AG04450 (cell line): ENCODE measurements at regions of chr1 and their contacts with region 1.

Region 1: DNA sequence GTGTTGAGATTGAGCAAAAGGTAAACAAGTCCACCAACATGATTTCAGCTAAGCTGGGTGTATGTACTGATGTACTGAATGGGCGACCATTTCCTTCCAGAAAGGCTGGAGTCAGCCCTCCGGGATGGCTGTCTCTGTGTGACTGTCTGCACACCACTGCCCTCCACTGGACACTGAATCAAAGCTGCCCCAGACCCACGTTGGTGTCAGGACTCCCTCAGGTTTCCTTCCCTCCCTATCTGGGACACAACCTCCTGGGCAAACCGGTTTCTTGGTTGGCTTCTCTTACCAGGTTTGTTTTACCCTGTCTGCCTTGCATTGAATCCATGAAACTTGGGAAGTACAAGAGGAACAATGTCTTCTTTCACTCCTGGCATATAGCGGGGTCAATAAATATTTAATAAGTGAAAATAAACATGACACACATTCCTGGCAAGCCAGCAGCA is 5.3 kb upstream of the SRP9 start:
- DNase-seq: peak; percentile 82
- H3K4me3 ChIP-seq: no peak overlapping the region
- H3K27ac ChIP-seq: no peak overlapping the region
- H3K27me3 ChIP-seq: no peaks in the 10 kb centered on the region
- CTCF ChIP-seq: peak; percentile 92

Region 2: DNA sequence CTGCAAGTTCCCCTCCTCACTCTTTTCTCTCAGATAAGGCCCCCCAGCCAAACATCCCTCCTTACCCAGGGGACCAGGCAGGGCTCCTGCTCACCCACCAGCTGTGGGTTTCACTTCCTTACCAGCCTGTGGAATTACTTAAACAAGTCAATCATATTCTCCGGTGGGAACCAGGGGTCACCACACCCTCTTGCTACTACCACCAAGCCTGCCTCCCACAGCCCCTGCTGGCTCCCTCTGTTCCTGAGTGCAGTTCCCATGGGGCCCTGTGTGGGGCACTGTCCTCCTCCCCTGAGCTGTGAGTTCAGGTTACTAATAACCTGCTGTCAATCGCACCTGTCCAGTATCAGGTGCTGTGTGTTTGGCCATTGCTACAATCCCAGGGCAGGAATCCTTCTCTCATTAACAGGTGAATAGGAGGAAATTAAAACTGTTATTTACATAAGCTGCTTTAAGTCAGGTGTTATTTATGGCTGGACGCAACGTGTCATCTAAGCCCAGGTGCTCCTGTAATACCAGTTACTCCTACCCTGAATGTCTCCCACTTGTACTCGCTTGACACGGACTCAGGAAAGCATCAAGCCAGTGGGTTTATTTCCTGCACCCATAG is 291.4 kb before region 1 on chr1:
- CTCF ChIA-PET with region 1: interaction called, 102 read pairs
- POLR2A ChIA-PET with region 1: interaction called, 4 read pairs
- DNase-seq: no peak
- H3K4me3 ChIP-seq: no peak overlapping the region
- H3K27ac ChIP-seq: no peak overlapping the region
- H3K27me3 ChIP-seq: no peaks in the 10 kb centered on the region
- CTCF ChIP-seq: peak; percentile 72

Region 3: GRCh38 chr1:225506727-225507126 is 265.6 kb before region 1 on chr1:
- CTCF ChIA-PET with region 1: interaction called, 12 read pairs
- POLR2A ChIA-PET with region 1: interaction called, 3 read pairs
- DNase-seq: no peak
- H3K4me3 ChIP-seq: no peak overlapping the region
- H3K27ac ChIP-seq: no peak overlapping the region
- H3K27me3 ChIP-seq: no peaks in the 10 kb centered on the region
- CTCF ChIP-seq: no peak

Region 4: GRCh38 chr1:225523263-225523950 is 248.9 kb before region 1 on chr1:
- CTCF ChIA-PET with region 1: interaction called, 12 read pairs
- POLR2A ChIA-PET with region 1: interaction called, 8 read pairs
- DNase-seq: no peak
- H3K4me3 ChIP-seq: no peak overlapping the region
- H3K27ac ChIP-seq: no peak overlapping the region
- H3K27me3 ChIP-seq: no peaks in the 10 kb centered on the region
- CTCF ChIP-seq: no peak

Region 5: DNA sequence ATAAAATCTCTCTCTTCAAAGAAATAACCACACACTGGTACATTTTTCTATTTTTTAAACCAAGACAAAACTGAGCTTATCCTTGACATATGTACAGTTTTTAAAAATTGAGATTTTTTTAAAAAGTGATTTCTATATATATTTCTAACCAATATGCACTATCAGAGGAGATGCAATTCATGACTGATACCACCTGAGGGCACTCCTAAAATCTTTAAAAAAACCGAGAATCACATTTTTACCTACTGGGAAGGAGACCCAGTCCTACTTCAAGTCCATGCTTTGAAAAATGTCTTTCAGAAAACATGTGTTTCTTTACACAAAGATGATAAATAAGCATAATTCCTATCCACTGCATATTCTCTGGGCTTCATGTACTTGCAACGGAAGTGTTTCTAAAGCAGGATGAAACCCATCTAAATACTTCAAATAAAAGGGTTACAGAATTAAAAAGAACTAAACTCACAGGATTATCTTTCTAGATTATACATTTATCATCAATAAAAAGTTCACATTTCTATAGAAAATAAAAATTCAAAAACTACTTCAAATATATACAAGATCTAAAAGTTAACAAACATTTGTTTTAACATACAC is 218.0 kb before region 1 on chr1:
- CTCF ChIA-PET with region 1: interaction called, 34 read pairs
- POLR2A ChIA-PET with region 1: interaction called, 4 read pairs
- DNase-seq: no peak
- H3K4me3 ChIP-seq: no peak overlapping the region
- H3K27ac ChIP-seq: no peak overlapping the region
- H3K27me3 ChIP-seq: no peaks in the 10 kb centered on the region
- CTCF ChIP-seq: peak; percentile 62

Region 6: GRCh38 chr1:225825607-225826007 is 53.3 kb after region 1 on chr1:
- CTCF ChIA-PET with region 1: no interaction called
- POLR2A ChIA-PET with region 1: no interaction called
- DNase-seq: no peak
- H3K4me3 ChIP-seq: no peak overlapping the region
- H3K27ac ChIP-seq: no peak overlapping the region
- H3K27me3 ChIP-seq: no peaks in the 10 kb centered on the region
- CTCF ChIP-seq: no peak